ENCODE measurements at regions of chr1 and their contacts with region 1.

Region 1: GRCh38 chr1:231421993-231422764 is at the start of gene EGLN1:
- DNase-seq: peak; percentile 87
- H3K4me3 ChIP-seq: peak within 1 kb of the TSS; percentile 84 to 85 (median 84)
- H3K27ac ChIP-seq: peak within 1 kb of the TSS; percentile 63
- H3K4me1 ChIP-seq: peaks cover 20% of the 10 kb centered on the region
- H3K27me3 ChIP-seq: no peaks in the 10 kb centered on the region
- CTCF ChIP-seq: peak; percentile 4 to 52
- total RNA-seq, gene EGLN1: 18.5 to 24.0 TPM

Region 2: GRCh38 chr1:231357831-231358354 is 64.3 kb before region 1 on chr1:
- CTCF ChIA-PET with region 1: no interaction called
- dilution Hi-C with region 1: no loop called
- in situ Hi-C with region 1: loop called in 1 of 2 experiments (anchors 5 kb)
- intact Hi-C with region 1: loop called (anchors 1 kb)
- DNase-seq: peak; percentile 82
- H3K4me3 ChIP-seq: no peak overlapping the region
- H3K27ac ChIP-seq: no peak overlapping the region
- H3K4me1 ChIP-seq: peaks cover 17% of the 10 kb centered on the region
- H3K27me3 ChIP-seq: no peaks in the 10 kb centered on the region
- CTCF ChIP-seq: peak; percentile 62 to 77

Region 3: GRCh38 chr1:231383159-231383860 is 38.9 kb before region 1 on chr1:
- CTCF ChIA-PET with region 1: no interaction called
- dilution Hi-C with region 1: no loop called
- in situ Hi-C with region 1: no loop called
- intact Hi-C with region 1: loop called (anchors 5 kb)
- DNase-seq: peak; percentile 74
- H3K4me3 ChIP-seq: no peak overlapping the region
- H3K27ac ChIP-seq: no peak overlapping the region
- H3K4me1 ChIP-seq: peaks cover 28% of the 10 kb centered on the region
- H3K27me3 ChIP-seq: no peaks in the 10 kb centered on the region
- CTCF ChIP-seq: no peak

Region 4: GRCh38 chr1:231528172-231529029 is 106.2 kb after region 1 on chr1 and contains the start of gene TSNAX:
- CTCF ChIA-PET with region 1: no interaction called
- dilution Hi-C with region 1: no loop called
- in situ Hi-C with region 1: no loop called
- intact Hi-C with region 1: loop called (anchors 1 kb)
- DNase-seq: peak; percentile 90
- H3K4me3 ChIP-seq: peak within 1 kb of the TSS; percentile 75 to 86 (median 81)
- H3K27ac ChIP-seq: peak within 1 kb of the TSS; percentile 84
- H3K4me1 ChIP-seq: peaks cover 12% of the 10 kb centered on the region
- H3K27me3 ChIP-seq: no peaks in the 10 kb centered on the region
- CTCF ChIP-seq: no peak
- total RNA-seq, gene TSNAX: 30.8 to 35.8 TPM

Measured in mammary epithelial cell (primary cell).